GM12878 (cell line): ENCODE measurements at regions of chr1 and their contacts with region 1.

Region 1: GRCh38 chr1:213122514-213122929 is 71.5 kb downstream of the RPS6KC1 start:
- DNase-seq: no peak
- ATAC-seq: peak; percentile 47; the same call in 1 of the 3 replicates
- H3K4me3 ChIP-seq: no peak overlapping the region
- H3K27ac ChIP-seq: no peak overlapping the region
- H3K4me1 ChIP-seq: no peaks in the 10 kb centered on the region
- H3K27me3 ChIP-seq: no peaks in the 10 kb centered on the region
- CTCF ChIP-seq: peak in 2 of 3 experiments; percentile 28 to 31; a peak in 3 of 6 replicates
- EP300 ChIP-seq: no peak
- POLR2A ChIP-seq: no peak
- RAD21 ChIP-seq: peak; percentile 54

Region 2: GRCh38 chr1:213110349-213111300 is 11.9 kb before region 1 on chr1:
- CTCF ChIA-PET with region 1: interaction called, 18 read pairs
- POLR2A ChIA-PET with region 1: no interaction called
- RAD21 ChIA-PET with region 1: interaction called, 3 read pairs
- SMC1A ChIA-PET with region 1: interaction called, 7 read pairs
- in situ Hi-C with region 1: no loop called
- intact Hi-C with region 1: no loop called
- DNase-seq: peak; percentile 41
- ATAC-seq: peak; percentile 97
- H3K4me3 ChIP-seq: no peak overlapping the region
- H3K27ac ChIP-seq: no peak overlapping the region
- H3K4me1 ChIP-seq: peaks cover 7% of the 10 kb centered on the region
- H3K27me3 ChIP-seq: no peaks in the 10 kb centered on the region
- CTCF ChIP-seq: no peak
- EP300 ChIP-seq: peak in 1 of 2 experiments; percentile 43; a peak in 1 of 4 replicates
- POLR2A ChIP-seq: no peak
- RAD21 ChIP-seq: no peak

Region 3: GRCh38 chr1:213135572-213135971 is 13.1 kb after region 1 on chr1:
- CTCF ChIA-PET with region 1: interaction called, 17 read pairs
- POLR2A ChIA-PET with region 1: no interaction called
- RAD21 ChIA-PET with region 1: no interaction called
- SMC1A ChIA-PET with region 1: interaction called, 11 read pairs
- in situ Hi-C with region 1: no loop called
- intact Hi-C with region 1: no loop called
- DNase-seq: no peak
- ATAC-seq: no peak
- H3K4me3 ChIP-seq: no peak overlapping the region
- H3K27ac ChIP-seq: no peak overlapping the region
- H3K4me1 ChIP-seq: no peaks in the 10 kb centered on the region
- H3K27me3 ChIP-seq: no peaks in the 10 kb centered on the region
- CTCF ChIP-seq: no peak
- EP300 ChIP-seq: no peak
- POLR2A ChIP-seq: no peak
- RAD21 ChIP-seq: no peak

Region 4: DNA sequence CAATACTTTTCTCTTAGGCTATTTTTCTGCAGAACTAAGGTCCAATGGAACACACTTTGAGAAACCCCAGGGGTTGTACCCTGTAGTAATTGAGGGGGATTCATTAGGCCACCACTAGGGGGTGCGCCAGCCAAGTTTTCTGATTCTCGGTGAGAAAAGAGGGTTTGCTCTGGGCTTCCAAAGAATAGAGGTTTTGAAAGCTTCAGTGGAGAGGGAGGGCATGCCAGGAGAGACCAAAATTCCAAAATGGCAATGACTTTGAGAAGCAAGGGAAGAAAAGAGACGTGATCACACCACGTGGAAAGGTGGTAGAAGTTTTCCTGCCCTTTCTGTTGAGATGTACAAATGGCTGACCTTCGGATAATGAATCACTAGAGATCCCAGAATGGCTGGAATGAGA is 251.8 kb after region 1 on chr1:
- CTCF ChIA-PET with region 1: interaction called, 5 read pairs
- POLR2A ChIA-PET with region 1: no interaction called
- RAD21 ChIA-PET with region 1: no interaction called
- SMC1A ChIA-PET with region 1: no interaction called
- in situ Hi-C with region 1: no loop called
- intact Hi-C with region 1: loop called (anchors 5 kb)
- DNase-seq: no peak
- ATAC-seq: peak; percentile 96
- H3K4me3 ChIP-seq: no peak overlapping the region
- H3K27ac ChIP-seq: no peak overlapping the region
- H3K4me1 ChIP-seq: no peaks in the 10 kb centered on the region
- H3K27me3 ChIP-seq: no peaks in the 10 kb centered on the region
- CTCF ChIP-seq: peak; percentile 84 to 86 (median 84)
- EP300 ChIP-seq: no peak
- POLR2A ChIP-seq: no peak
- RAD21 ChIP-seq: peak; percentile 86

Region 5: GRCh38 chr1:214123061-214123784 is 1000.7 kb after region 1 on chr1:
- CTCF ChIA-PET with region 1: interaction called, 14 read pairs
- POLR2A ChIA-PET with region 1: no interaction called
- RAD21 ChIA-PET with region 1: no interaction called
- SMC1A ChIA-PET with region 1: interaction called, 3 read pairs
- in situ Hi-C with region 1: loop called (anchors 10 kb)
- intact Hi-C with region 1: loop called (anchors 2 kb)
- DNase-seq: no peak
- ATAC-seq: peak; percentile 93
- H3K4me3 ChIP-seq: no peak overlapping the region
- H3K27ac ChIP-seq: no peak overlapping the region
- H3K4me1 ChIP-seq: no peaks in the 10 kb centered on the region
- H3K27me3 ChIP-seq: no peaks in the 10 kb centered on the region
- CTCF ChIP-seq: peak; percentile 44 to 69 (median 49); a peak in 5 of 6 replicates
- EP300 ChIP-seq: no peak
- POLR2A ChIP-seq: no peak
- RAD21 ChIP-seq: peak; percentile 77